ENCODE measurements at regions of chr1 and their contacts with region 1.

Region 1: DNA sequence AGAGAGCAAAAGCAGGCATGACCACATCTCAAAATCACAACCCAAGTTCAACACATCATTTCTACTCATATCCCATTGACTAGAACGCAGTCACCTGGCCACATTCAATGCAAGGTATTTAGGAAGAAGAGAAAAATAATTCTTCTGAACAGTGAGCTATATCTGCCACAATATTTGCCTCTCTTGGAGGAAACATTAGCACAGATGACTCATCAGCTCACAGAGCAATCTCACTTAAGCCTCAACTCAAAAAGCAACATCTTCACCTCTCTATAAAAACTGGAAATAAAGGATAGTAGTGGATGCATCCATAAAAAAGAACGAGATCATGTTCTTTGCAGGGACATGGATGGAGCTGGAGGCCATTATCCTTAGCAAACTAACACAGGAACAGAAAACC is 143.9 kb upstream of the FMN2 start:
- DNase-seq: no peak
- H3K4me3 ChIP-seq: no peak overlapping the region
- H3K27ac ChIP-seq: no peak overlapping the region
- H3K4me1 ChIP-seq: no peaks in the 10 kb centered on the region
- H3K27me3 ChIP-seq: no peaks in the 10 kb centered on the region
- CTCF ChIP-seq: no peak
- POLR2A ChIP-seq: no peak

Region 2: DNA sequence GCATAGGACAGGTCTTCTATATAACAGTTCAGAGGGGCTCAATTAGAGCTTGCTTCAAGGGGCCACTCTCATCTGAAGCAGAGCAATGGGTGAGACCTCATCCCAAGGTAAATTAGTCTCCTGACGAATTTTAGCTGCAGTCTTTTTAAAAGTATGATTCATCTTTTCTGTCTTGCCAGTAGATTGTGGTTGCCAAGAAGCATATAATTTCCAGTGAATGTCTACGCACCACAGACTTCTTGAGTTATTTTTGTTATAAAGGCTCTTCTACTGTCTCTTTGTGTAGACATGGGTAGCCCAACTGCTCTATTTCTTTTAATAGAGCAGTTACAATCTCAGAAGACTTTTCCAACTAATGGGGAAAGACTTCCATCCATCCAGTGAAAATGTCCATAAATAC is 35.0 kb after region 1 on chr1:
- intact Hi-C with region 1: loop called in 1 of 2 experiments (anchors 5 kb)
- DNase-seq: no peak
- H3K4me3 ChIP-seq: no peak overlapping the region
- H3K27ac ChIP-seq: no peak overlapping the region
- H3K4me1 ChIP-seq: no peaks in the 10 kb centered on the region
- H3K27me3 ChIP-seq: no peaks in the 10 kb centered on the region
- CTCF ChIP-seq: no peak
- POLR2A ChIP-seq: no peak

Measured in adrenal gland (tissue), 19 donors.